Posterior cingulate gyrus (tissue), 11 donors: ENCODE measurements at regions of chr10 and their contacts with region 1.

Region 1: GRCh38 chr10:24556750-24557742 is 166.6 kb downstream of the ARHGAP21 start:
- DNase-seq: peak in 2 of 10 donors; percentile 19 to 40

Region 2: DNA sequence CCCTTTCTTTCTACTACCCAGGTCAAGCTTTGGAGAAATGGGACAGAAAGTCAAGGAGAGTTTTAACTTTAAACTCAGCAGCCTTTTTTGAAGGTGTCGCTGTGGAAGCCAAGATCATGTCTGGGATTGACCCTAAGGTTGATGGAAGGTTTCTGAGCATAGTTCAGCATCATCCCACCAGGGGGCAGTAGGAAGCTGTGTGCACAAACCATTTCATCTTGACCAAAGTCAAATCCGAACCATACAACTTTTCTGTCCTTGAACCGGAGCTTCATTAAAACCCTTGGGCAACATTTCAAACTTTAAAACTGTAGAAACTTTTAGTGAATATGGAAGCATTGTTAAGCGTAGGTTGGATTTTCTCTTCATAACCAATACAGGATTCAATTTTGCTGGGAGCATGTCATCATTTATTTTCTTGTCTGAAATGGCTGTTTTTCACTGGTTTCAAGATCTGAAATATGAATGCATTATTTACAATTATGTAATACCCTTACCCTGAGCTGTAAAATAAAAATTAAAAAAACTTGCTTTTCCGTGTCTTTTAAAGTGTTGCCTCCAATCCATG is 562.5 kb before region 1 on chr10:
- intact Hi-C with region 1: loop called (anchors 2 kb)
- DNase-seq: peak in 5 of 10 donors; percentile 18 to 63 (median 50)

Region 3: DNA sequence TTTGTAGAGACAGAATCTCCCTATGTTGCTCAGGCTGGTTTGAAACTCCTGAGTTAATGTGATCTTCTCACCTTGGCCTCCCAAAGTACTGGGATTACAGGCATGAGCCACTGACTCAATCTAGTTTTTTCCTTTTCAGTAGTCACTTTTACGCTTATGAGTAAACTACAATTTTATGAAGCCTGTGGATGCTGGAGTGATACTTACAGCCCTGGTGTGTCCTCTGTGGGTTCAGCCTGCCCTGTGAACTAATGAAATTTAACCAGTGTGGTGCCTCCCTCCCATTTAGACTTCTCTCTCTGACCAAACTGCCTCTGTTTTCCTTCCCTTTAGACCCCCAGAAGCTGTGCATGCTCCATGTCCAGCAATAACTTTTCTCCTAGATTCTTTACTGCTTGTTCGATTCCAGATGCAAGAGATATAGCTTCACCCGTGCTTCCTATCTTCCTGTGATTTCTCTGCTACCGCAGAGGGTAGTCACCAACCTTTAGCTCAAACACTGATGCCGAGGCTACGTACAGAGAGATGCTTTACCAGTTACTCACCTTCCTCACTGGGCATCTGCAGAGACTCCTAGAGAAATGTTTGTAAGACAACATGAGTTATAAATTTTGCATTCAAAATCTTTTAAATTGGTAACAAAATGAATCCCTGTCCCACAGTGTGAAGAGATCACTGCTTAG is 257.3 kb before region 1 on chr10:
- intact Hi-C with region 1: no loop called
- DNase-seq: no peak